HEK293 (cell line): ENCODE measurements at regions of chr10 and their contacts with region 1.

Region 1: GRCh38 chr10:101095542-101096213 is 33.9 kb downstream of the KAZALD1 start:
- H3K4me3 ChIP-seq: no peak overlapping the region
- H3K27ac ChIP-seq: no peak overlapping the region
- H3K4me1 ChIP-seq: no peaks in the 10 kb centered on the region
- CTCF ChIP-seq: peak; percentile 91

Region 2: DNA sequence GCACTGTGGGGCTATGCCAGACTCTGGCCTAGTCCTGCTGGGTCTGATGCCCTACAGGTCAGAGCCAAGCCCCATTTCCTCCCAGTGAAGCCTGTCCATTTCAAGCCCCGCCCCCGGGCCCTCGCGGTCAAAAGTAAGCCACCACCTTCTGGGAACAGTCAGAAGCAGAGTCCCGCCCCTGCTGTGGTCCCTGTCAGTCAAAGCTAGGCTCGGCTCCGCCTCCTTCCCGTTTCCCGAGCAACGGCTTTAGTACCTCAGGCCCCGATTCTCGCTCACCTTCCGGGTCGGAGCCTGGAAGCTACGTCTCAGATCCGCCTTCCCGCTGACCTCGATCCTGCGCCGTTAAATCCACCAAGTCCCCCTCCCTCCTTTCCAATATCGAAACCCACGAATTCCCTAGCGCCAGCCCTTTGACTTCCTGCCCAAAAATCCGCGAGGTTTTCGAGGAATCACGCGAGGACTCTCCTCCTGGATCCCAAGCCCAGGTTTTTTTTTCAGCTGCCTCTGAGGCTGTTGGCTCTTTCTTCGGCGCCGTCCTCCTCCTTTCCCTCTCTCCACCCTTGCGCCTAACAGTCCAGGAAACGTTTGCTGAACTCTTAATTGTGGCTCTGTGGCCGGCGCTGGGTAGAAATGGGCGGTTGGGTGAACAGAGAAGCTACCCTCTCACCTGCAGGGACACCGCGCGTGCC is 52.9 kb before region 1 on chr10:
- CTCF ChIA-PET with region 1: interaction called, 30 read pairs
- POLR2A ChIA-PET with region 1: interaction called, 5 read pairs
- H3K4me3 ChIP-seq: peak overlapping the region; percentile 53
- H3K27ac ChIP-seq: peak overlapping the region; percentile 80
- H3K4me1 ChIP-seq: peaks cover 5% of the 10 kb centered on the region; the same call in 1 of the 2 replicates
- CTCF ChIP-seq: no peak

Region 3: DNA sequence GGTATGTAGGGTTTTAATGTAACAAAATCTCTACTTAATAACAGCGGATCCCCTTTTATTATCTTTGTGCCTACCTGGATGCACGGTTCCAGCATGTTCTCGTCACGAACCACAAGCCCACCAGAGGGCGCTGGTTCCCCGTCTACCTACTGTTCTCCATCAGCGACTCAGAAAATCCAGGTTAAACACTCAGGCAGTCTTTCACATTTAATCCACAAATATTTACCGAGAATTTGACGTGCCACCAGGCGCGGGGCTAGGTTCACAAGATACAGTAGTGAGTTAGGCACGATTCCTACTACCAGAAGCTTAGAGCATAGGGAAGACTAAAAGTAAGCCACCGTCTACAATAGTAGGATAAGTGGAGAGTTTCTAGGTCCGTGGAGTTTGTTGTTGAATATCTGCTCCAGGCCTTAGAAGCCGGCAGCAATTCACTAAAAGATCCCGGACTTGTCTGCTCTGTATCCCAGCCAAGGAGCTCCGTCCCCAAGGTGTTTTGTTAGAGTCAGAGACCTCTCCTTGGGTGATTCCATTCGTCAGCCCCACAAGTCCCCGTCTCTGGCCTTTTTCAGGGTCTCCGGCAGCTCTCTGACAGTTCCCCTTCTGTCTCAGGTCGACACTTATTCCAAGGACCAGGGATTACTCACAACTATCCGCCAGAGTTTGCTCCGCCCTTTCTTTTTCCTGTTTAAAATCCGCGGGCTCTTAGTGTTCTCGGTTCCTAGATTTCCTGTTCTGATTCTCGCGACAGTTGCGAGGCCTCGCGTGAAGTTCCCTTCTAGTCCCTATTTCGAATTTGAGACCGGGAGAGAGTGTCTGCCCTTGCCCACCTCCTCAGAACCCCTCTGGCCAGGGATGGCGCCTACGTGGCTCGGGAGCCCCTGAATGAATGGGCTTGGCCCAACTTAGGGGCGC is 35.4 kb before region 1 on chr10:
- CTCF ChIA-PET with region 1: interaction called, 33 read pairs
- POLR2A ChIA-PET with region 1: interaction called, 11 read pairs
- H3K4me3 ChIP-seq: peak overlapping the region; percentile 91
- H3K27ac ChIP-seq: peak overlapping the region; percentile 97
- H3K4me1 ChIP-seq: peaks cover 18% of the 10 kb centered on the region
- CTCF ChIP-seq: peak; percentile 75

Region 4: GRCh38 chr10:101075775-101076174 is 19.9 kb before region 1 on chr10:
- CTCF ChIA-PET with region 1: interaction called, 19 read pairs
- POLR2A ChIA-PET with region 1: no interaction called
- H3K4me3 ChIP-seq: no peak overlapping the region
- H3K27ac ChIP-seq: no peak overlapping the region
- H3K4me1 ChIP-seq: no peaks in the 10 kb centered on the region
- CTCF ChIP-seq: no peak

Region 5: DNA sequence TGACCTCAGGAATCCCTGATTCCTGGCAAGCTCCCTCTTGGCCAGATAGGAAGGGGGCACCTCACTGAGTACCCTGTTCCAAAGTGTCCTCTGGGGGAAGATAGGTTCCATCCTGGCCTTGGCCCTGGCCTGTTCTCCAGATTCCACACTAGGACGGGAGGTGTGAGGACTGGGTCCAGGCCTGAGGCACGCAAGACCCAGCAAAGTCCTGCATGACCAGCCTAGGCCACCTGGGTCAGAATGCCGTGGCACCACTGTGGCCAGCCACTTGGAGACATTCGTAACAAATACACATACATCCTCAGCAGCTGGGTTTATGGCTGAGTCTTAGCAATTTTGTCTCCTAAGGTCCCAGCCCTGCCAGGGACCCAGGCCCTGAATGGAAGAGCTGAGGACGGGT is 12.1 kb after region 1 on chr10:
- CTCF ChIA-PET with region 1: interaction called, 22 read pairs
- POLR2A ChIA-PET with region 1: no interaction called
- H3K4me3 ChIP-seq: no peak overlapping the region
- H3K27ac ChIP-seq: no peak overlapping the region
- H3K4me1 ChIP-seq: no peaks in the 10 kb centered on the region
- CTCF ChIP-seq: no peak

Region 6: GRCh38 chr10:101130984-101131961 is 35.6 kb after region 1 on chr10 and contains the start of gene TLX1:
- CTCF ChIA-PET with region 1: interaction called, 506 read pairs
- POLR2A ChIA-PET with region 1: interaction called, 6 read pairs
- H3K4me3 ChIP-seq: peak within 1 kb of the TSS; percentile 51
- H3K27ac ChIP-seq: peak within 1 kb of the TSS; percentile 87
- H3K4me1 ChIP-seq: peaks cover 17% of the 10 kb centered on the region
- CTCF ChIP-seq: peak; percentile 95

Region 7: GRCh38 chr10:101189541-101190401 is 94.1 kb after region 1 on chr10:
- CTCF ChIA-PET with region 1: no interaction called
- POLR2A ChIA-PET with region 1: no interaction called
- H3K4me3 ChIP-seq: no peak overlapping the region
- H3K27ac ChIP-seq: no peak overlapping the region
- H3K4me1 ChIP-seq: no peaks in the 10 kb centered on the region
- CTCF ChIP-seq: no peak

Region 8: DNA sequence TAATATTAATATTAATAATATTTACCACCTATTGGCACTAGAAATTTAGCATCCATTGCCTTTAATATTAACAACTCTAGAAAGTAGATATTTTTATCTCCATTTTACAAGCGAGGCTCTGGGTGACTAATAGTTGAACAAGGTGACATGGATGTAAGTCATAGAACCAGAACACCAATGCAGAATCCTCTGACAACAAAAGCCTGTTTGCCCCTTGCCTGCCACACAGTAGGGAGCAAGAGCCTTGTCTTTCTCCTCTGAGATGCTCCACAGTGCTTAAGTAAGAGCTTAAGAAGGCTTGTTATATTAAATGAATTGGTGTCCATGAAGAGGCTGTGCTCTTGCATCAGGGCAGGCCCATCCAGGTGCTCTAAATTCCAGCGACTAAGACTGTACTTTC is 184.8 kb after region 1 on chr10:
- CTCF ChIA-PET with region 1: no interaction called
- POLR2A ChIA-PET with region 1: no interaction called
- H3K4me3 ChIP-seq: no peak overlapping the region
- H3K27ac ChIP-seq: no peak overlapping the region
- H3K4me1 ChIP-seq: peaks cover 5% of the 10 kb centered on the region
- CTCF ChIP-seq: no peak